ENCODE measurements at regions of chr19 and their contacts with region 1.

Region 1: GRCh38 chr19:51688672-51689571 is 4.2 kb upstream of the SPACA6 start:
- DNase-seq: peak in 1 of 2 donors; percentile 94
- H3K4me3 ChIP-seq: peak overlapping the region; percentile 71 to 89
- H3K27ac ChIP-seq: peak overlapping the region; percentile 97 to 100
- H3K4me1 ChIP-seq: peaks cover 12 to 21% of the 10 kb centered on the region in 2 donors
- H3K27me3 ChIP-seq: no peaks in the 10 kb centered on the region
- CTCF ChIP-seq: no peak

Region 2: DNA sequence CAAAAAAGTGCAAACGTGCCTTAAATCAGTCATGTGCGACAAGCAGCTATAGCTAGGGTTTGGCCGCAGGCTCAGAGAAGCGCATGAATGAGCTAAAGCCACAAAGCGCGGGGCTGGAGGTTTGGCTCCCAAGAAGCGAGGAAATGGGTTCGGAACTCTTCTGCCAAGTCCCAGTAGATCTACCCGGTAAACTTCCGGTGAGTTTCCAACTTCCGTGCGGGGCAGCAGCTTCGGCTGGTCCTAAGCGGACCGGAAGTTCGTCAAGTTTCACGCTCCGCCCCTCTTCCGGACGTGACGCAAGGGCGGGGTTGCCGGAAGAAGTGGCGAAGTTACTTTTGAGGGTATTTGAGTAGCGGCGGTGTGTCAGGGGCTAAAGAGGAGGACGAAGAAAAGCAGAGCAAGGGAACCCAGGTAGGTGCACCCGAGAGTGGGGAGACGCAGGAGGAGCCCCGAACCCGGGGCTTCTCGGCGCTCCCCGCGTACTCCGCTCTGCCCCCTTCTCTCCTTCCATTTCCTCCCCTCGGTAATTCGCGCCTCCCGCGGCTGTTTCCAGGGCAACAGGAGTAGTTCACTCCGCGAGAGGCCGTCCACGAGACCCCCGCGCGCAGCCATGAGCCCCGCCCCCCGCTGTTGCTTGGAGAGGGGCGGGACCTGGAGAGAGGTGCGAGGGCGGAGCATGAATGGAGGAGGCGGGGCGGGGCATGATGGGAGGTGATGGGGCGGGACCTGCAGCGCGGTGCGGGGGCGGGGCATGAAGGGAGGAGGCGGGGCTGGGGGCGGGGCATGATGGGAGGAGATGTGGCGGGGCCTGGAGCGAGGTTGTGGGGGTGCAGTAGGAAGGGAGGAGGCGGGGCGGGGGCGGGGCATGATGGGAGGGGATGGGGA is 1312.5 kb before region 1 on chr19 and contains the start of gene NR1H2:
- intact Hi-C with region 1: loop called (anchors 10 kb)
- DNase-seq: peak; percentile 77 to 97
- H3K4me3 ChIP-seq: peak within 1 kb of the TSS; percentile 88 to 90
- H3K27ac ChIP-seq: peak within 1 kb of the TSS; percentile 99 to 100
- H3K4me1 ChIP-seq: peaks cover 0 to 6% of the 10 kb centered on the region in 2 donors
- H3K27me3 ChIP-seq: no peaks in the 10 kb centered on the region
- CTCF ChIP-seq: no peak
- total RNA-seq, gene NR1H2: 150 TPM

Region 3: DNA sequence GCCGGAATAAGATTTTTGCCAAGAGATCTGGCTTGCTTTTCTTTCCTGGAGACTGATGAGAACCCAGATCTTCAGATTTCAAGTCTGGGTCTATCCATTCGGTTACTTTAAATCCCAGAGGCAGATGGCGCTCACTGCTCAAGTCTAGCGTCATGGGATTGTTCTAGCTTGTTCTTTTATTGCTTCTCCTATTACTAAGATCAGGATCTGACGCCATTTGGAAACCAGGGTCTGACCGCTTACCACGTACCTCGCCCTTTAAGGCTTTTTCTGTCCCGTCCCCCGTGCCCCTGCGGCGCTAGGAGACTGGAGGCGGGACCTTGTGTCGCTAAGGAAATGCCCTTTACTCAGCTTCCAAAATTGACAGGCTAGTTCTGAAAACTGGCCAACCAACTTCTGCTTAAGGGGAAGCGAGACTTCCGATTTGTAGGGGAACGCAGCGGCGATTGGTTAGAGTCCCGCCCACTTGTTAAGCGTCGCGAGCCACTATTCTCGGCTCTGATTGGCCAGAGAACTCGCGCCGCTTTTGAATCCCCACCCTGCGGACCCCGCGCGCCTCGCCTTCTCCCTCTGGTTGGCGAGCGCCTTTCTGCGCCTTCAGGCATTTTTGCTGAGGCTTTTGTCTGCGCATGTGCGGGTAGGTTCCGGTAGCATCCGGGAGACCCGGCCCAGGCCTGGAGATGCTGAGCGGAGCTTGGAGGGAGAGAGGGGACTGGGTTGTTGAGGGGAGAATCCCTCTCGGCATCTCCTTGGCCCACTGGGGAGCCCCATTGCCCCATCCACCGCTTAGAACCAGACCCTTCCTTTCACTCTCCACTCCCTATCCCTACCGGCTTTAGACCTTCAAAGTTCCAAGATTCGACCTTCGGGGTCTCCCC is 294.7 kb before region 1 on chr19:
- intact Hi-C with region 1: loop called (anchors 2 kb)
- DNase-seq: peak; percentile 92 to 98
- H3K4me3 ChIP-seq: peak overlapping the region; percentile 43 to 63
- H3K27ac ChIP-seq: peak overlapping the region; percentile 74
- H3K4me1 ChIP-seq: peaks cover 3 to 8% of the 10 kb centered on the region in 2 donors
- H3K27me3 ChIP-seq: no peaks in the 10 kb centered on the region
- CTCF ChIP-seq: peak in 1 of 3 experiments; percentile 5

Region 4: GRCh38 chr19:51660975-51661600 is 27.8 kb before region 1 on chr19:
- intact Hi-C with region 1: loop called (anchors 1 kb)
- DNase-seq: no peak
- H3K4me3 ChIP-seq: no peak overlapping the region
- H3K27ac ChIP-seq: no peak overlapping the region
- H3K4me1 ChIP-seq: peaks cover 0 to 2% of the 10 kb centered on the region in 2 donors
- H3K27me3 ChIP-seq: no peaks in the 10 kb centered on the region
- CTCF ChIP-seq: peak; percentile 13 to 54 (median 45)

Region 5: GRCh38 chr19:51703575-51704515 is 14.9 kb after region 1 on chr19:
- intact Hi-C with region 1: loop called (anchors 1 kb)
- DNase-seq: peak; percentile 90 to 99
- H3K4me3 ChIP-seq: peak overlapping the region; percentile 60 to 76
- H3K27ac ChIP-seq: peak overlapping the region; percentile 80 to 93
- H3K4me1 ChIP-seq: peaks cover 9 to 17% of the 10 kb centered on the region in 2 donors
- H3K27me3 ChIP-seq: no peaks in the 10 kb centered on the region
- CTCF ChIP-seq: peak; percentile 32 to 54 (median 44)

Measured in ascending aorta (tissue), 2 donors.